Activated naive CD8-positive, alpha-beta T cell treated with anti-CD3 and anti-CD28 coated beads, Interleukin-2, amount 10 ng/mL, durations not matched to agents 7 days and 5 days (primary cell): ENCODE measurements at regions of chr15 and their contacts with region 1.

Region 1: GRCh38 chr15:99928429-99928981 is 195.3 kb upstream of the LYSMD4 start:
- DNase-seq: peak; percentile 95
- ATAC-seq: peak; percentile 91
- H3K4me3 Mint-ChIP-seq: peak overlapping the region; percentile 84
- H3K27ac Mint-ChIP-seq: peak overlapping the region; percentile 78
- H3K4me1 Mint-ChIP-seq: peaks cover 11% of the 10 kb centered on the region
- H3K27me3 Mint-ChIP-seq: peaks cover 37% of the 10 kb centered on the region

Region 2: DNA sequence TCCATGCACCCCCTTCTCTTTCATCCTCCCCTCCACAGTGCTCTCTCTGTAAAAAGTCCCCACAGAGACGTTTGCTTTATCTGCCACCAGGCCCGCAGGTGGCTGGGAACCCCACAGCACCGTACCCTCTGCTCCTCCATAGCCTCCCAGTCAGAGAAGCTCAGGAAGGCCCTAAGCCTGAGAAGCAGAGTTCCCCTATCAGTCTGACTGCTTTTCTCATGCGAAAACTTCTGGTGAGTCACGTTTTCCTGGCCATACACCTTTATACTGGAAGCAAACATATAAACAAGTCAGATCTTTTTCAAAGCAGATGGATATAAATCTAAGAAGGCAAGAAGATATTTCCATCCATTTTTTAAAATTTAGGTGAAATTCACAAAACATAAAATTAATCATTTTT is 414.2 kb before region 1 on chr15:
- POLR2A ChIA-PET with region 1: no interaction called
- DNase-seq: no peak
- ATAC-seq: no peak
- H3K4me3 Mint-ChIP-seq: no peak overlapping the region
- H3K27ac Mint-ChIP-seq: no peak overlapping the region
- H3K4me1 Mint-ChIP-seq: peaks cover 33% of the 10 kb centered on the region
- H3K27me3 Mint-ChIP-seq: peaks cover 2% of the 10 kb centered on the region

Region 3: GRCh38 chr15:100338971-100339444 is 410.5 kb after region 1 on chr15:
- POLR2A ChIA-PET with region 1: interaction called, 20 read pairs
- DNase-seq: peak; percentile 58
- ATAC-seq: peak; percentile 64
- H3K4me3 Mint-ChIP-seq: peak overlapping the region; percentile 83
- H3K27ac Mint-ChIP-seq: peak overlapping the region; percentile 78
- H3K4me1 Mint-ChIP-seq: peaks cover 35% of the 10 kb centered on the region
- H3K27me3 Mint-ChIP-seq: peaks cover 10% of the 10 kb centered on the region